HEK293 (cell line): ENCODE measurements at regions of chr20 and their contacts with region 1.

Region 1: GRCh38 chr20:33097001-33097400 is 17.6 kb downstream of the BPIFB4 start:
- H3K4me3 ChIP-seq: no peak overlapping the region
- H3K27ac ChIP-seq: no peak overlapping the region
- H3K4me1 ChIP-seq: no peaks in the 10 kb centered on the region
- CTCF ChIP-seq: no peak

Region 2: GRCh38 chr20:32556312-32557184 is 540.5 kb before region 1 on chr20:
- CTCF ChIA-PET with region 1: no interaction called
- POLR2A ChIA-PET with region 1: no interaction called
- H3K4me3 ChIP-seq: no peak overlapping the region
- H3K27ac ChIP-seq: no peak overlapping the region
- H3K4me1 ChIP-seq: peaks cover 6% of the 10 kb centered on the region
- CTCF ChIP-seq: no peak

Region 3: DNA sequence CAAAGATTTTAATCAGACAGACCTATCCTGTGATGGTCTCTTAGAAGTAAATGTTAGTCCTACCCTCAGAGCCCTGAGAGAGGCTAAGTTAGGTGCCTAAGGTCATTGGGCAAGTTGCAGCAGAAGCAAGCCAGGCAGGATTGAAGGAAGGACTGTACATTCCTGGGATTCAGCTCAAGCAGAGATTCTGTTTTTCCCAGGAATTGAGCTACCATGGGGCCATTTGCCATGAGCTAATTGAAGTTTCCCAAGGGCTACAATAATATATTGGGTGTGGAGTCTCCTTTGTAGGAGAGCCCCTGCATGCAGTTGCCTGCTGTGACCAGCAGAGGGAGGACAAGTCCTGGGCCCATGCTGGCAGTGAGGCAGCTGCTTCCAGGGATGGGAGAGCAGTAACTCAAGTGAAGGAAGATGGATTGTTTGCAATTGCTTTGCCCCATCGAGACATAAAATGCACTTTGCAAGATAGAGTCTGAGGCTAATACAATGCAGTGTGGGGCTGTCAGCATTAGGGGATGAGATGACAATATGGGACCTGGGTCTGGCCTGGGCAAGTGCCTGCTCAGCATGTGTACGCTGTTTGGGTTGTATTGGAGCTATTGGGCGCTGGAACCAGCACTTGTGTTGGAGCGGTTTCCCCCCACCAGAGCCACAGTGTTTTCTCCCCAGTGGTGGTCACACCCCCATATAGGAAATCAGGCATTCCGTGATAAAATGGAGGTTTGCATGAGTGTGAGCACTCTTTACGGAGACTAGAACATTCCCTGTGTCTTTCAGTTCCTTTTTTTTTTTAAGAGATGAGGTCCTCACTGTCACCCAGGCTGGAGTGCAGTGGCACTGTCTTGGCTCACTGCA is 306.9 kb before region 1 on chr20:
- CTCF ChIA-PET with region 1: interaction called, 15 read pairs
- POLR2A ChIA-PET with region 1: no interaction called
- H3K4me3 ChIP-seq: no peak overlapping the region
- H3K27ac ChIP-seq: no peak overlapping the region
- H3K4me1 ChIP-seq: no peaks in the 10 kb centered on the region
- CTCF ChIP-seq: peak; percentile 77

Region 4: DNA sequence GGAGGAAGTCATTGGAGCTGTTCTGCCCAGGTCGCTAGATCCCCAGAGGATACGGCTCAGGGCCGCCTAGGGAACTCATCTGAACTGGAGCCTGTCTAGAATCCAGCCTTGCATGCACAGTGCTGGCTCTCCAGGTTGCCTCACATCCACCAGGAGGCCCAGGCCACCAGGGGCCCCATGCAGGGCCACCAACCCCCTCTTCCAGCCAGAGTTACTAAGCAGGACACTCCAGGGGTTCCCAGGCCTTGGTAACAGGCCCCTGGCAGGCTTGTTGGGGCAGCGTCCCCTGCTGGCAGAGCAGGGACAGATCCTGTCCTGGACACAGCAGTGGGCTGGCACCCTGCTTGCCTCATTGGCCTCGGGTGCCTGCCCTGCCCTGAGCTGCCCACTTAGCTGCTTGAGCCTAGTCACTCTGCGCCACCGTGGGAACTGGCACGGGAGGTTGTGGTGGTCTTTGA is 202.9 kb before region 1 on chr20:
- CTCF ChIA-PET with region 1: interaction called, 11 read pairs
- POLR2A ChIA-PET with region 1: no interaction called
- H3K4me3 ChIP-seq: no peak overlapping the region
- H3K27ac ChIP-seq: no peak overlapping the region
- H3K4me1 ChIP-seq: no peaks in the 10 kb centered on the region
- CTCF ChIP-seq: peak; percentile 57

Region 5: GRCh38 chr20:32902456-32903420 is 194.3 kb before region 1 on chr20:
- CTCF ChIA-PET with region 1: interaction called, 34 read pairs
- POLR2A ChIA-PET with region 1: no interaction called
- H3K4me3 ChIP-seq: no peak overlapping the region
- H3K27ac ChIP-seq: no peak overlapping the region
- H3K4me1 ChIP-seq: no peaks in the 10 kb centered on the region
- CTCF ChIP-seq: peak; percentile 77

Region 6: GRCh38 chr20:33211817-33212424 is 114.9 kb after region 1 on chr20:
- CTCF ChIA-PET with region 1: interaction called, 13 read pairs
- POLR2A ChIA-PET with region 1: no interaction called
- H3K4me3 ChIP-seq: no peak overlapping the region
- H3K27ac ChIP-seq: no peak overlapping the region
- H3K4me1 ChIP-seq: no peaks in the 10 kb centered on the region
- CTCF ChIP-seq: no peak